Pancreas (tissue), 10 donors: ENCODE measurements at regions of chr5 and their contacts with region 1.

Region 1: DNA sequence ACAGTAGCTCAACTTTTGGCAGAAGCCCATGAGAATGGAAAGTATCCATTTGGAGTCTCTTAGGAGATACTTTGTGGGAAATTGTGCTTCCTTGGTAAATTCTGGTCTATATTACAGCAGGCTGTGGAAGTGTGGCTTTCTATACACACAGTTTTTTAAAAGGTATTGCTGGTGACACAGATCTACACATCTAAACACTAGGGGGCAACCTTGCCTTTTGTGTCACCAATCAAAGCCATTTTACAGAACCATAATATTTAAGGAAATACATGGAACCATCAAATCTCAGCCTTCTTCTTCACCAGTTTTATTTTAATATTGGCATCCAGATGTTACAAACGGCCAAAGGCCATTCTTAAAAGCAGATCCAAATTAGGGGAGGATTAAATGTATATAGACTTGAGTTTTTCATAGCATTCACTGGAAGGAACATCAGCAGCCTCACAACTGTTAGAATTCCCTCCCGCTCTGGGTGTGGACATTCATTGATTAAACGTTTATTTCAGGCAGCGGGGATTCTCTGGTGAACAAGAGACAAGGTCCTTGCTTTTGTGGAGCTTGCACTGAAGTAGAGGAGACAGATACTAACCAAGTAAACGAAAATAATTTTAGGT is 132.4 kb upstream of the EPB41L4A start:
- DNase-seq: peak in 3 of 6 donors; percentile 21 to 52 (median 38)
- ATAC-seq: peak; percentile 70 to 92 (median 86)
- H3K4me3 ChIP-seq: no peak overlapping the region
- H3K27ac ChIP-seq: no peak overlapping the region
- H3K4me1 ChIP-seq: no peaks in the 10 kb centered on the region
- H3K27me3 ChIP-seq: no peaks in the 10 kb centered on the region
- CTCF ChIP-seq: peak; percentile 49 to 66 (median 56)

Region 2: GRCh38 chr5:112757468-112758208 is 206.1 kb after region 1 on chr5:
- intact Hi-C with region 1: loop called (anchors 5 to 10 kb)
- DNase-seq: no peak
- ATAC-seq: peak; percentile 81 to 96 (median 94)
- H3K4me3 ChIP-seq: no peak overlapping the region
- H3K27ac ChIP-seq: no peak overlapping the region
- H3K4me1 ChIP-seq: peaks cover 0 to 5% (median 0%) of the 10 kb centered on the region in 3 donors
- H3K27me3 ChIP-seq: no peaks in the 10 kb centered on the region
- CTCF ChIP-seq: peak; percentile 48 to 73 (median 68)

Region 3: GRCh38 chr5:112921833-112922817 is 370.6 kb after region 1 on chr5 and contains the start of gene REEP5:
- intact Hi-C with region 1: loop called in 1 of 3 experiments (anchors 10 kb)
- DNase-seq: peak; percentile 82 to 94 (median 88)
- ATAC-seq: peak; percentile 90 to 95 (median 94)
- H3K4me3 ChIP-seq: peak within 1 kb of the TSS; percentile 45 to 99 (median 86)
- H3K27ac ChIP-seq: peak within 1 kb of the TSS; percentile 89 to 99 (median 97)
- H3K4me1 ChIP-seq: peaks cover 13 to 29% (median 21%) of the 10 kb centered on the region in 3 donors
- H3K27me3 ChIP-seq: no peaks in the 10 kb centered on the region
- CTCF ChIP-seq: peak; percentile 57 to 81 (median 68)
- total RNA-seq, gene REEP5: 67.0 to 84.7 (median 74.2) TPM